ENCODE measurements at regions of chr20 and their contacts with region 1.

Region 1: GRCh38 chr20:34363062-34363464 is at the start of gene ITCH:
- H3K4me3 ChIP-seq: peak within 1 kb of the TSS; percentile 88
- H3K27ac ChIP-seq: peak within 1 kb of the TSS; percentile 73
- H3K4me1 ChIP-seq: 0 out of 2 replicates have a peak, but pooled peaks cover 5% of the 10 kb centered on the region
- CTCF ChIP-seq: no peak

Region 2: DNA sequence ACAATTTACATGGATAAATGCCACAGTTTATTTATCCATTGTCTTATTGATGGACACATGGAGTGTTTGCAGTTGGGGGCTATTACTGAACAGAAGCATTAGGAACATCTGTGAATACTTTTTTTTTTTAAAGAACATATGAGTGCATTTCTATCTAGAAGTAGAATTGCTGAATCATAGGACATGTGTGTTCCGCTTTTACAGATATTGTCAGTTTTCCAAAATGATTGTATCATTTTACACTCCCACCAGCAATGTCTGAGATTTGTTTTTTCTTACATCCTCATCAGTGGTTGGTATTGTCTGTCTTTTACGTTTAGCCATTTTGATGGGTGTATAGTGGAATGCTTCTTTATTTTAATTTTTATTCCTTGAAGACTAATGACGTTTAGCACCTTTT is 163.9 kb before region 1 on chr20:
- CTCF ChIA-PET with region 1: no interaction called
- POLR2A ChIA-PET with region 1: no interaction called
- H3K4me3 ChIP-seq: no peak overlapping the region
- H3K27ac ChIP-seq: no peak overlapping the region
- H3K4me1 ChIP-seq: 0 out of 2 replicates have a peak, but pooled peaks cover 2% of the 10 kb centered on the region
- CTCF ChIP-seq: no peak

Region 3: GRCh38 chr20:34210271-34210670 is 152.8 kb before region 1 on chr20:
- CTCF ChIA-PET with region 1: no interaction called
- POLR2A ChIA-PET with region 1: no interaction called
- H3K4me3 ChIP-seq: no peak overlapping the region
- H3K27ac ChIP-seq: no peak overlapping the region
- H3K4me1 ChIP-seq: no peaks in the 10 kb centered on the region
- CTCF ChIP-seq: no peak

Region 4: GRCh38 chr20:34302723-34303528 is 60.1 kb before region 1 on chr20 and contains the start of gene AHCY:
- CTCF ChIA-PET with region 1: no interaction called
- POLR2A ChIA-PET with region 1: interaction called, 12 read pairs
- H3K4me3 ChIP-seq: peak within 1 kb of the TSS; percentile 93
- H3K27ac ChIP-seq: peak within 1 kb of the TSS; percentile 90
- H3K4me1 ChIP-seq: peaks cover 16% of the 10 kb centered on the region
- CTCF ChIP-seq: peak; percentile 72

Region 5: GRCh38 chr20:34350095-34350494 is 13.0 kb before region 1 on chr20:
- CTCF ChIA-PET with region 1: interaction called, 3 read pairs
- POLR2A ChIA-PET with region 1: interaction called, 10 read pairs
- H3K4me3 ChIP-seq: no peak overlapping the region
- H3K27ac ChIP-seq: no peak overlapping the region
- H3K4me1 ChIP-seq: no peaks in the 10 kb centered on the region
- CTCF ChIP-seq: no peak

Region 6: DNA sequence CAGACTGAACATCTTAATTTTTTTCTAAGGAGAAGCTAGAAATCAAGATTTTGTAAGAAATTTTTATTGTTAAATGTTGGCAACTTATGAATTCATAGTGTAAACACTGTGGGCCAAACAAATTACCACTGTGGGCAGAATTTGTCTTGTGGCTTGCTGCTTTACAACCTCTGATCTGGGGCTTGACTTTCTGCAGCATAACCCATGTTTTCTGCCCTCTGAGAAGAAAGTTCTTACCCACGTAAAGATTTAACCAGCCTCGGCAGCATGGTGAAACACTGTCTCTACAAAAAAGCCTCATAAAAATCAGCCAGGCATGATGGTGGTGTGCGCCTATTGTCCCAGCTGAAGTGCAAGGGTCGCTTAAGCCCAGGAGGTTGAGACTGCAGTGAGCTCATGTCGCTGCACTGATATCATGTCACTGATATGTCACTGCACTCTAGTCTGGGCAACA is 12.9 kb after region 1 on chr20:
- CTCF ChIA-PET with region 1: interaction called, 3 read pairs
- POLR2A ChIA-PET with region 1: interaction called, 16 read pairs
- H3K4me3 ChIP-seq: no peak overlapping the region
- H3K27ac ChIP-seq: peak overlapping the region; percentile 60
- H3K4me1 ChIP-seq: peaks cover 13% of the 10 kb centered on the region
- CTCF ChIP-seq: no peak

Region 7: GRCh38 chr20:34388000-34388399 is 24.9 kb after region 1 on chr20:
- CTCF ChIA-PET with region 1: no interaction called
- POLR2A ChIA-PET with region 1: interaction called, 11 read pairs
- H3K4me3 ChIP-seq: no peak overlapping the region
- H3K27ac ChIP-seq: no peak overlapping the region
- H3K4me1 ChIP-seq: peaks cover 13% of the 10 kb centered on the region
- CTCF ChIP-seq: no peak

Region 8: DNA sequence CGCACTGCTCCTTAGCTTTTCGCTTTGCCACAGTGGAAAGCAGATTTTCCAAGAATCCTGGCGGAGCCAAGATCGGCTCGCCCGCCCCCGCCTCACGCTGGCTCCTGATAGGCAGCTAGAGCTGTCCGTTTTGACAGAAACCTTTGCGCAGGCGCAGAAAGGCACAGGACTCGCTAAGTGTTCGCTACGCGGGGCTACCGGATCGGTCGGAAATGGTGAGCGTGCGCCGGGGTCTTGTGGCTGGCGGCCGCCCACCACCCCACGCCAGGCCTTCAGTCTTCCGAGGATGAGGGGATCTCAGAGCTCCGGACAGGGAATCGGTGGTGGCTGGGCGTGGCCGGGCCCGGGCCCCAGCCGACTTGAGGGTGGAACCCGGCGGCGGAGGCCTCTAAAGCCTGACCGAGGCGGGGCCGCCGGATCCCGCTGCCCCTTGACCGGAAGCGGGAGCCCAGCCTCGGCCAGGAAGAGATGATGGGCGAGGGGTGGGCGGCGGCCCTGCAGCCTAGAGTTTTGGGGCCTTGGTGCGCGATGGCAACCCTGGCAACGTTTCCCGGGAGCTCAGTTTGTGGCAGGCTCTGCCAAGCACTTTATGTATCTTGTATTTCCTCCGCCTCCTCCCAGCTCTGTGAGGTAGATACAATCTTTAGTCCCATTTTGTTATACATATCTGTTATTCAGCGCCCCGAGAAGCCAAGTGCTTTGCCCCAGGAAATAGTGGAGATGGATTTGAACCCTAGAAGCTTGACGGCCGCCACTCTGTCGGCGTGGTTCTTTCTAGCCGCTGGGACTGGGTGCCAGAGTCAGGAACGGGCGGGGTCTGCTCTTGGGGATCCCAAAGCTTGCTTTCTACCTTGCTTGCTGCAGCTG is 153.4 kb after region 1 on chr20 and contains the start of gene DYNLRB1:
- CTCF ChIA-PET with region 1: interaction called, 4 read pairs
- POLR2A ChIA-PET with region 1: interaction called, 17 read pairs
- H3K4me3 ChIP-seq: peak within 1 kb of the TSS; percentile 80
- H3K27ac ChIP-seq: peak within 1 kb of the TSS; percentile 87
- H3K4me1 ChIP-seq: no peaks in the 10 kb centered on the region
- CTCF ChIP-seq: no peak; the same call in 1 of the 2 replicates

Measured in HEK293 (cell line).